Head of caudate nucleus (tissue), 42 donors: ENCODE measurements at regions of chr11 and their contacts with region 1.

Region 1: DNA sequence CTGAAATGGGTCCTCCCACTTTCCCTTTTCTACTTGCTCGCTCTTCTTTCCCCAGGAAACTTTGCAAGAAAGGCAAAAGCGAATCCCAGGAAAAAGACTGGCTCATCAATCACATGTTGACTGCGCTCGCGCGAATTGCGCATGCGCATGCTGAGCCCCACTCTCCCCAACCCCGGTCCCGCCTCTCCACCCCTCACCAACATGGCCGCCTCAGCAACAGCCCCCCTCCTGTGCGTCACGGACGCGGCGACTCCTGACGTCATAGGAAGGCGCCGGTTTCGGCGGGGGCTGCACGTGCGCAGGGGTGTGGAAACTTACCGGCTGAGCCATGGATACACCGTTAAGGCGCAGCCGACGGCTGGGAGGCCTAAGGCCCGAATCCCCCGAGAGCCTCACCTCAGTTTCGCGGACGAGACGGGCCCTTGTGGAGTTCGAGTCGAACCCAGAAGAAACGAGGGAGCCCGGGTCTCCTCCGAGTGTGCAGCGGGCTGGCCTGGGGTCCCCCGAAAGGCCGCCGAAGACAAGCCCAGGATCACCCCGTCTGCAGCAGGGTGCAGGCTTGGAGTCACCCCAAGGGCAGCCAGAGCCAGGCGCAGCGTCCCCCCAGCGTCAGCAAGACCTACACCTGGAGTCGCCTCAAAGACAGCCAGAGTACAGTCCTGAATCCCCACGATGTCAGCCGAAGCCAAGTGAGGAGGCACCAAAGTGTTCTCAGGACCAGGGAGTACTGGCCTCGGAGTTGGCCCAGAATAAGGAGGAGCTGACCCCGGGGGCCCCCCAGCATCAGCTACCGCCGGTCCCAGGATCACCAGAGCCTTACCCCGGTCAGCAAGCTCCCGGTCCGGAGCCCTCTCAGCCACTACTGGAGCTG is at the start of gene CCDC86:
- DNase-seq: peak; percentile 92 to 98 (median 96)

Region 2: GRCh38 chr11:61152816-61153592 is 311.0 kb after region 1 on chr11:
- intact Hi-C with region 1: loop called (anchors 10 kb)
- DNase-seq: peak in 10 of 42 donors; percentile 20 to 58 (median 36)